IMR-90 (cell line): ENCODE measurements at regions of chr6 and their contacts with region 1.

Region 1: GRCh38 chr6:7604506-7604905 is 14.5 kb downstream of the SNRNP48 start:
- DNase-seq: no peak
- ATAC-seq: no peak
- H3K4me3 ChIP-seq: no peak overlapping the region
- H3K27ac ChIP-seq: no peak overlapping the region
- H3K4me1 ChIP-seq: no peaks in the 10 kb centered on the region
- H3K27me3 ChIP-seq: no peaks in the 10 kb centered on the region
- CTCF ChIP-seq: no peak
- POLR2A ChIP-seq: no peak
- RAD21 ChIP-seq: no peak

Region 2: GRCh38 chr6:7292596-7293255 is 311.8 kb before region 1 on chr6:
- CTCF ChIA-PET with region 1: no interaction called
- POLR2A ChIA-PET with region 1: no interaction called
- dilution Hi-C with region 1: no loop called
- in situ Hi-C with region 1: no loop called
- intact Hi-C with region 1: loop called (anchors 2 kb)
- DNase-seq: no peak
- ATAC-seq: no peak
- H3K4me3 ChIP-seq: no peak overlapping the region
- H3K27ac ChIP-seq: no peak overlapping the region
- H3K4me1 ChIP-seq: no peaks in the 10 kb centered on the region
- H3K27me3 ChIP-seq: no peaks in the 10 kb centered on the region
- CTCF ChIP-seq: no peak
- POLR2A ChIP-seq: no peak
- RAD21 ChIP-seq: no peak

Region 3: GRCh38 chr6:7414811-7415210 is 189.7 kb before region 1 on chr6:
- CTCF ChIA-PET with region 1: no interaction called
- POLR2A ChIA-PET with region 1: no interaction called
- dilution Hi-C with region 1: no loop called
- in situ Hi-C with region 1: no loop called
- intact Hi-C with region 1: loop called (anchors 5 kb)
- DNase-seq: peak; percentile 94
- ATAC-seq: peak; percentile 89
- H3K4me3 ChIP-seq: no peak overlapping the region
- H3K27ac ChIP-seq: peak overlapping the region; percentile 34; the same call in 1 of the 2 replicates
- H3K4me1 ChIP-seq: peaks cover 11% of the 10 kb centered on the region
- H3K27me3 ChIP-seq: no peaks in the 10 kb centered on the region
- CTCF ChIP-seq: no peak
- POLR2A ChIP-seq: no peak
- RAD21 ChIP-seq: no peak